Gastrocnemius medialis (tissue), 4 donors: ENCODE measurements at regions of chr10 and their contacts with region 1.

Region 1: GRCh38 chr10:102009801-102010425 is 46.1 kb downstream of the ARMH3 start:
- DNase-seq: peak; percentile 33 to 51
- ATAC-seq: peak; percentile 96 to 100
- H3K4me3 ChIP-seq: no peak overlapping the region
- H3K27ac ChIP-seq: no peak overlapping the region
- H3K4me1 ChIP-seq: no peaks in the 10 kb centered on the region
- H3K27me3 ChIP-seq: no peaks in the 10 kb centered on the region
- CTCF ChIP-seq: peak; percentile 79 to 97 (median 87)
- POLR2A ChIP-seq: no peak

Region 2: DNA sequence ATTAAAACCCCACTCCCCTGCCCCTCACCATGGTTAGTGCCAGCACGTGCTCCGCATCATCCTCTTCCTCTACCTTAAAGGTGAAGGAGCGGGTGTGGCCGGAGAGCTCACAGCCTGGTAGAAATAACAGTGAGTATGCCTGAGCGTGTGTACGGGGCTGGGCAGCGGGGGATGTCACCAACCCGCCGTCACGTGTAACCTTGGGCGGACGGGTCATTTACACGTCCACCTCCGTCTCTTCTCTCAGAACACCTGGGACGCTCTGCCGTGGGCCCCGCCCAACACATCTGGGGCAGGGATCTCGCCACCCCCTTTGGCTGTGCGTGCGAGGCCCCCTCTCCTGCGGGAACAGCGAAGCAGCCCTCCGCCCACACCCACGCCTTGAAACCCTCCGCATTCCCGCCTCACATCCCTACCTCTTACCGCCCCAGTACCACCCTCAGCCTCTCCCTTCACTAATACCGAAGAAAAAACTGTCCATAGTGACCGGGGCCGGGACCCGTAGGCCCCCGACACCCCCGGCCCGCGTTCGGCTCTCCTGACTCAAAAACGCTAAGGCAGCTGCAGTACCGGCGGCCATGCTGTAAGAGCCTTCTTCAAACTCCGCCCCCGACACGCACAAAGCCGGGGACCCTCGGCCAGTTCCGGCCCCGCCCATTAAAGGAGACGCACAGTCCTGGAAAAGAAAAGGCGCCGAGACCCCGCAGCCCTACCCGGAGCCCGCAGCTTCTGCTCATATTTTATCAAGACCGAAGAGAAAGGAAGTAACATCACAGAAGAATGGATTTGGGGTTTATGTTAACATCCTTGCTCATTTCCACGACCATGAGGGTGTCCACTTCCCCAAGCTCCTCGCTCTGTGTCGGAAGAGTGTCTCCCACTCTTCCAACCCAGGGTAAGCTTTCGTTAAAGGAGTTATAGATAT is 226.8 kb before region 1 on chr10 and contains the start of gene NPM3:
- in situ Hi-C with region 1: no loop called
- intact Hi-C with region 1: loop called (anchors 1 kb)
- DNase-seq: peak; percentile 68 to 73
- ATAC-seq: peak; percentile 67 to 77
- H3K4me3 ChIP-seq: peak within 1 kb of the TSS; percentile 68 to 85 (median 76)
- H3K27ac ChIP-seq: peak within 1 kb of the TSS; percentile 14 to 76 (median 65)
- H3K4me1 ChIP-seq: peaks cover 23 to 31% of the 10 kb centered on the region in 2 donors
- H3K27me3 ChIP-seq: peaks cover 13 to 18% (median 16%) of the 10 kb centered on the region in 3 donors
- CTCF ChIP-seq: no peak
- POLR2A ChIP-seq: peak in 1 of 2 donors; percentile 14
- total RNA-seq, gene NPM3: 12.9 to 37.0 (median 16.0) TPM

Region 3: GRCh38 chr10:101840741-101841453 is 169.0 kb before region 1 on chr10:
- in situ Hi-C with region 1: loop called in 3 of 4 experiments (anchors 5 to 10 kb)
- intact Hi-C with region 1: loop called (anchors 1 kb)
- DNase-seq: peak; percentile 40 to 60
- ATAC-seq: peak; percentile 80 to 86
- H3K4me3 ChIP-seq: peak overlapping the region; percentile 29 to 53 (median 46)
- H3K27ac ChIP-seq: no peak overlapping the region
- H3K4me1 ChIP-seq: peaks cover 21 to 39% of the 10 kb centered on the region in 2 donors
- H3K27me3 ChIP-seq: no peaks in the 10 kb centered on the region
- CTCF ChIP-seq: peak; percentile 72 to 95 (median 89)
- POLR2A ChIP-seq: no peak

Region 4: DNA sequence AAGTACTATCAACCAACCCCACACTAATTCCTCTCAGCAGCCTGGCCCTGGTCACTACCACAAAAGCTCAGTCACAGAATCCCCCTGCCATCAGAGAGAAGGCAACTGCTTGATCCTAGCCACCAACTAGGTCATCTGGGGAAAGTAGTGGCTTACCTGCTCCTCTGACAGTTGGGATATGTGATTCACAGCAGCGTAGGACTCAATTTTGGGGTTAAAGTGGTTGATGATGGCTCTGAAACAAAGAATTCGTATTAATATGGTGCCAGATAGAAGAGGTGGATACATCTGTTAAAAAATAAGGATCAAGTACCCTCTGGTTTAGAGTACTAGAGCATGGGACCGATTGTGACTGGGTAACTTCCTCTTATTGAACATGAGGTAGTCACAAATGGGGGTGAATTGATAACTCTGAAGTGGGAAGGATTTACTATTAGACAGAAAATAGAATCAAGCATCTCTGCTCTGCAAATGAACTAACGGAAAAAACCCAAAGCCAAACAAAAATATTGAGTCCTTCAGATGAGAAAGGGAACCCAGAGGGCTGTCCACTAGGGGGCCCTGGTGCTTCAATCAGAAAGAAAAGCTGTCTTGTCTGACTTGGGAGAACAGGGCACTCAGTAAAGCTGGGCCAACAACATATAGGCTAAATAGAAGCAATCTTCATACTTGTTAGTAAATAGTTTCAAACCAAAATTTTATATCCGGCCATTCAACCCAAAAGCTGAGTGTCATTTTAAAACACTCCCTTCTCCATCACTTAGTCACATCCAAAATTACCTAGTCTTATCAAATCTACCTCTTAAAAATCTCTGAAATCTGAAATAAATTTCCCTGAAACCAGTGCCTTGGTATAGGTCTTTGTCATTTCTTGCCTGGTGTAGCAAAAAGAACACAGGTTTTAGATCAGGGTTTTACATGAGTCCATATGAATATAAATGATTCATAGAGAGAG is 120.4 kb before region 1 on chr10:
- in situ Hi-C with region 1: loop called in 2 of 4 experiments (anchors 5 to 10 kb)
- intact Hi-C with region 1: loop called (anchors 1 kb)
- DNase-seq: peak; percentile 25 to 68
- ATAC-seq: peak; percentile 55 to 68
- H3K4me3 ChIP-seq: no peak overlapping the region
- H3K27ac ChIP-seq: no peak overlapping the region
- H3K4me1 ChIP-seq: peaks cover 12 to 13% of the 10 kb centered on the region in 2 donors
- H3K27me3 ChIP-seq: no peaks in the 10 kb centered on the region
- CTCF ChIP-seq: peak; percentile 75 to 84 (median 75)
- POLR2A ChIP-seq: no peak

Region 5: GRCh38 chr10:102540023-102540422 is 530.1 kb after region 1 on chr10:
- in situ Hi-C with region 1: no loop called
- intact Hi-C with region 1: no loop called
- DNase-seq: no peak
- ATAC-seq: no peak
- H3K4me3 ChIP-seq: no peak overlapping the region
- H3K27ac ChIP-seq: no peak overlapping the region
- H3K4me1 ChIP-seq: peaks cover 0 to 4% of the 10 kb centered on the region in 2 donors
- H3K27me3 ChIP-seq: no peaks in the 10 kb centered on the region
- CTCF ChIP-seq: peak in 1 of 5 experiments; percentile 10
- POLR2A ChIP-seq: no peak